Naive thymus-derived CD4-positive, alpha-beta T cell (primary cell): ENCODE measurements at regions of chr4 and their contacts with region 1.

Region 1: GRCh38 chr4:139278912-139279759 is 889 bp downstream of the MGARP start:
- DNase-seq: peak in 1 of 9 donors; percentile 12
- ATAC-seq: peak; percentile 47
- H3K4me3 ChIP-seq: peak overlapping the region; percentile 45
- H3K4me3 Mint-ChIP-seq: peak overlapping the region; percentile 63 to 84 (median 79)
- H3K27ac ChIP-seq: no peak overlapping the region
- H3K27ac Mint-ChIP-seq: no peak overlapping the region
- H3K4me1 ChIP-seq: peaks cover 0 to 14% of the 10 kb centered on the region in 2 donors
- H3K4me1 Mint-ChIP-seq: peaks cover 15 to 22% (median 19%) of the 10 kb centered on the region in 7 donors
- H3K27me3 ChIP-seq: peaks cover 3 to 25% of the 10 kb centered on the region in 2 donors
- H3K27me3 Mint-ChIP-seq: peaks cover 41 to 77% (median 54%) of the 10 kb centered on the region in 5 donors

Region 2: GRCh38 chr4:139266583-139267257 is 12.4 kb before region 1 on chr4:
- CTCF ChIA-PET with region 1: no interaction called
- POLR2A ChIA-PET with region 1: no interaction called
- intact Hi-C with region 1: loop called in 1 of 2 experiments (anchors 1 kb)
- DNase-seq: peak in 8 of 9 donors; percentile 14 to 72 (median 20)
- ATAC-seq: peak; percentile 96
- H3K4me3 ChIP-seq: peak overlapping the region; percentile 42
- H3K4me3 Mint-ChIP-seq: peak overlapping the region; percentile 58 to 93 (median 84)
- H3K27ac ChIP-seq: no peak overlapping the region
- H3K27ac Mint-ChIP-seq: peak overlapping the region in 8 of 9 donors; percentile 4 to 86 (median 50)
- H3K4me1 ChIP-seq: peaks cover 12 to 14% of the 10 kb centered on the region in 2 donors
- H3K4me1 Mint-ChIP-seq: peaks cover 9 to 20% (median 14%) of the 10 kb centered on the region in 7 donors
- H3K27me3 ChIP-seq: no peaks in the 10 kb centered on the region
- H3K27me3 Mint-ChIP-seq: peaks cover 0 to 18% (median 0%) of the 10 kb centered on the region in 5 donors